MCF 10A (cell line): ENCODE measurements at regions of chr4 and their contacts with region 1.

Region 1: DNA sequence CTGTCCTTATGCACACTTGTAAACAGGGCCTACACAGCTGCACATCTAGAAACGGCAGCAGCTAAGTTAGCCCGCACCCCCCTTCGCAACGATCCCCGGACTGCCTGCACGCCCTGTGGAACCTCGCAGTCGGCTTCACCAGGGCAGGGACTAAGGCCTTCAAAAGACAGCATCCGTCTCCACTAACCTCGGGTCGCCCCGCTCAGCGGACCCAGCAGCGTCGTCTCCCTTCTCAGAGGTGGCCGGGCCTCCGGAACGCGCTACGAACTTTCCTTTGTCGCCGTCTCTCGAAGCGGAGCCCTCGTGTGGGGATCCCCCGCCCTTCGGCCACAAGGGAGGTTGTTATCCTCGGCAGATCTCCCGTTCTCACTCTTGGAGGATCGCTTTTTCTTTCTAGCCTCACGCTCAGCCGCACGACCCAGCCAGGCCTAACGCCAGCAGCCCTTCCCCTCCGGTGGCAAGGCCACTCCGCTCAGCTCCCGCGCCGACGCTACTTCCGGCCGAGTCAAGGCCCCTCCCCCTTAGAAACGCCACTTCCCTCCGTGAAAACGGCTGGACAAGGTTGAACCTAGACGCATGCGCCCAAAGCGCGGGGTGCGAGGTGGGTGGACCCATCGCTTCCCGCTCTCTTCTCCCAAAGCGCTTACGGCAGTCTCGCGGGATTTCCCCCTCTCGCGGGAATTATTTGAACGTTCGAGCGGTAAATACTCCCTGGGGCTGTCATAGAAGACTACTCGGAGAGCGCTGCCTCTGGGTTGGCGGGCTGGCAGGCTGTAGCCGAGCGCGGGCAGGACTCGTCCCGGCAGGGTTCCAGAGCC is at the starts of genes DCAF16 and NCAPG:
- DNase-seq: peak; percentile 100
- H3K4me3 Mint-ChIP-seq: peak within 1 kb of the TSS; percentile 89
- H3K27ac Mint-ChIP-seq: peak within 1 kb of the TSS; percentile 98
- H3K4me1 Mint-ChIP-seq: peaks cover 38% of the 10 kb centered on the region
- H3K27me3 Mint-ChIP-seq: no peaks in the 10 kb centered on the region
- CTCF ChIP-seq: no peak
- total RNA-seq, gene DCAF16: 38.0 and 41.4 TPM in 2 replicates
- total RNA-seq, gene NCAPG: 23.2 and 38.6 TPM in 2 replicates

Region 2: GRCh38 chr4:17511950-17512795 is 298.3 kb before region 1 on chr4 and contains the start of gene QDPR:
- CTCF ChIA-PET with region 1: interaction called, 6 read pairs
- POLR2A ChIA-PET with region 1: interaction called, 15 read pairs
- intact Hi-C with region 1: no loop called
- DNase-seq: peak; percentile 71
- H3K4me3 Mint-ChIP-seq: peak within 1 kb of the TSS; percentile 88
- H3K27ac Mint-ChIP-seq: peak within 1 kb of the TSS; percentile 75
- H3K4me1 Mint-ChIP-seq: peaks cover 37% of the 10 kb centered on the region
- H3K27me3 Mint-ChIP-seq: no peaks in the 10 kb centered on the region
- CTCF ChIP-seq: peak; percentile 44
- total RNA-seq, gene QDPR: 35.2 and 39.2 TPM in 2 replicates

Region 3: DNA sequence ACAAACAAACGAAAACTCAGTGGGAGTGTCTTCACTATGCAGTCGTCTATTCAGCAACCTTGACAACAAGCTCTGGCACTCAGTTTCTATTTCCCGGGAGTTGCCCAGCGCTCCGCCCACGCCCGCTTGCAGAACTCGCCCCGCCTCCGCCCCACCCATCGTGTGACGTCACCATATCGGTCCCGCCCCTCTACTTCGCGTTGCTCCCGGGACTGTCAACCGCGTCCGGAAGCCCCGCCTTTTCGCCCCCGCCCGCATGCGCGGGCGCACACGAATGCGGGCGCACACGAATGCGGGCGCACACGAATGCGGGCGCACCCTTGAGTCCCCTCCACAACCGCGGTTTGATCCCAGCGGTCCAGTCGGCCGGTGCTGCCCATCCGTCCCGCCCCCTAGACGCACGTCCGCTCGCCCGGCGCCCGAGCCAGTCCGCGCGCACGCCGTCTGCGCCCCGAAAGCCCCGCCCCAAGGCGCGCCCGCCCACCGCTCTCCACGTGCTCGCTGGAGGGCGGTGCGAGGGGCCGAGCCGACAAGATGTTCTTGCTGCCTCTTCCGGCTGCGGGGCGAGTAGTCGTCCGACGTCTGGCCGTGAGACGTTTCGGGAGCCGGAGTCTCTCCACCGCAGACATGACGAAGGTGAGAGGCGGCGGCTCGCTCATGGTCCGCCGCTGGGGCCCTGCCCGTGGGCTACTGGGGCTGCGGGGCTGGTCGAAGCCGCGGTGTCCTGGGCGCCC is 233.4 kb before region 1 on chr4 and contains the start of gene LAP3:
- CTCF ChIA-PET with region 1: interaction called, 3 read pairs
- POLR2A ChIA-PET with region 1: interaction called, 33 read pairs
- intact Hi-C with region 1: no loop called
- DNase-seq: peak; percentile 94
- H3K4me3 Mint-ChIP-seq: peak within 1 kb of the TSS; percentile 91
- H3K27ac Mint-ChIP-seq: peak within 1 kb of the TSS; percentile 94
- H3K4me1 Mint-ChIP-seq: peaks cover 12% of the 10 kb centered on the region
- H3K27me3 Mint-ChIP-seq: no peaks in the 10 kb centered on the region
- CTCF ChIP-seq: no peak
- total RNA-seq, gene LAP3: 31.0 and 45.0 TPM in 2 replicates

Region 4: DNA sequence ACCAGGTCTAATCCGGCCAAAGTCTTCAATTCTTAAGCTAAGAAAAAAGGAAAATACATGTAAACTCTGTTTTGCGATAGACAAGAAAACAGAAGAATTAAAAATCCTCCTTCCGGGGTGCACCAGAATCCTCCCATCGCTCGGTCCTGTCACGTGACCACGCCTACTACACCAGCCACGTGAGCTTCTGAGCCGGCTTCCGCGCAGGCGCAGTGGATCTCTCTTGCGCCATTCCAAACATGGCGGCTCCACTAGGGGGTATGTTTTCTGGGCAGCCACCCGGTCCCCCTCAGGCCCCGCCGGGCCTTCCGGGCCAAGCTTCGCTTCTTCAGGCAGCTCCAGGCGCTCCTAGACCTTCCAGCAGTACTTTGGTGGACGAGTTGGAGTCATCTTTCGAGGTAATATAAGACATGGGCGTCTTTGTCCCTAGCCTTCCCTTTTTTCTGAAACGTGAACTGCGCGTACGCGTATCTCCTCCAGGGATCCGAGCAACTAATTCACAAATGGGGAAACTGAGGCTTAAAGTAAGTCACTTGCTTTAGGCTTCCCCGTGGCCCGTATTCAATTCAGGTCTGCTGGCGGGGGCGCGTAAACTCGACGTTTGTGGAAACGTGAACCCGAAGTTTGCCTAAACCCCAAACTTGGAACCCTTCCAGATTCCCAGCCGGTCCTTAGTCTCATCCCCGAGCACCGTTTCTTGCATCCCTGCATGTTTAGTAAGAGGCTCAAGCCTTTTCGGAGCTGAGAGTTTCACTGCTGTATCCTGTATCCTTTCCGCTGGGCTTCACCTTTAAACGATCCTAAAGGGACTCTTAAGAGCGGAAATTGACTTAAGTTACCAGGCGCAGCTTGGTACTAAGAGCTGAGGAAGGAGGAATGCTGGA is 195.8 kb before region 1 on chr4 and contains the start of gene MED28:
- CTCF ChIA-PET with region 1: interaction called, 9 read pairs
- POLR2A ChIA-PET with region 1: interaction called, 59 read pairs
- intact Hi-C with region 1: no loop called
- DNase-seq: peak; percentile 96
- H3K4me3 Mint-ChIP-seq: peak within 1 kb of the TSS; percentile 99
- H3K27ac Mint-ChIP-seq: peak within 1 kb of the TSS; percentile 95
- H3K4me1 Mint-ChIP-seq: peaks cover 21% of the 10 kb centered on the region
- H3K27me3 Mint-ChIP-seq: no peaks in the 10 kb centered on the region
- CTCF ChIP-seq: no peak
- total RNA-seq, gene MED28: 31.8 and 32.1 TPM in 2 replicates

Region 5: GRCh38 chr4:17624821-17625220 is 185.6 kb before region 1 on chr4:
- CTCF ChIA-PET with region 1: no interaction called
- POLR2A ChIA-PET with region 1: no interaction called
- intact Hi-C with region 1: no loop called
- DNase-seq: no peak
- H3K4me3 Mint-ChIP-seq: no peak overlapping the region
- H3K27ac Mint-ChIP-seq: no peak overlapping the region
- H3K4me1 Mint-ChIP-seq: no peaks in the 10 kb centered on the region
- H3K27me3 Mint-ChIP-seq: no peaks in the 10 kb centered on the region
- CTCF ChIP-seq: no peak

Region 6: DNA sequence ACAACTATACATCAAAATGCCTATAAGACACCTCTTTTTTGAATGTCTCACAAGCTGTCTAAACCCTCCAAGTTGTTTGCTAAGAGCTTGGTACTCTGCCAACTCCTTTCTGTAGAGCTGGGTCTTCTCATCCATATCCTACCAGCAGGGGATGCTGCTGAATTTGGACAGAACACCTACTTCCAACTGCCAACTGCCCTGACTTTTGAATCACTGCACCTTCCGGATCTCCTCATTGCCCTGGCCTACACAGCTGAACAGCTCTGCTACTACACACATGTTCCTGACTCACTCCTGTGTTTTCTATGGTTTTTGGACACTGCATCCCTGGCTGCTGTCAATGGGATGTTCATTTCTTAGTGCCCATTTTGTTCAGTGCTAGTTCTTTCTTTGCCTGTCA is 47.7 kb before region 1 on chr4:
- CTCF ChIA-PET with region 1: interaction called, 3 read pairs
- POLR2A ChIA-PET with region 1: no interaction called
- intact Hi-C with region 1: loop called (anchors 2 kb)
- DNase-seq: peak; percentile 65
- H3K4me3 Mint-ChIP-seq: no peak overlapping the region
- H3K27ac Mint-ChIP-seq: no peak overlapping the region
- H3K4me1 Mint-ChIP-seq: no peaks in the 10 kb centered on the region
- H3K27me3 Mint-ChIP-seq: no peaks in the 10 kb centered on the region
- CTCF ChIP-seq: peak; percentile 30

Region 7: GRCh38 chr4:17823871-17824669 is 13.6 kb after region 1 on chr4:
- CTCF ChIA-PET with region 1: interaction called, 9 read pairs
- POLR2A ChIA-PET with region 1: interaction called, 64 read pairs
- intact Hi-C with region 1: loop called (anchors 1 kb)
- DNase-seq: no peak
- H3K4me3 Mint-ChIP-seq: peak overlapping the region; percentile 62
- H3K27ac Mint-ChIP-seq: peak overlapping the region; percentile 40
- H3K4me1 Mint-ChIP-seq: peaks cover 18% of the 10 kb centered on the region
- H3K27me3 Mint-ChIP-seq: no peaks in the 10 kb centered on the region
- CTCF ChIP-seq: no peak

Region 8: GRCh38 chr4:17981063-17981462 is 170.6 kb after region 1 on chr4:
- CTCF ChIA-PET with region 1: no interaction called
- POLR2A ChIA-PET with region 1: no interaction called
- intact Hi-C with region 1: no loop called
- DNase-seq: peak; percentile 1
- H3K4me3 Mint-ChIP-seq: no peak overlapping the region
- H3K27ac Mint-ChIP-seq: no peak overlapping the region
- H3K4me1 Mint-ChIP-seq: no peaks in the 10 kb centered on the region
- H3K27me3 Mint-ChIP-seq: no peaks in the 10 kb centered on the region
- CTCF ChIP-seq: no peak